Activated CD4-positive, alpha-beta memory T cell treated with anti-CD3 and anti-CD28 coated beads for 36 hours (primary cell): ENCODE measurements at regions of chr10 and their contacts with region 1.

Region 1: DNA sequence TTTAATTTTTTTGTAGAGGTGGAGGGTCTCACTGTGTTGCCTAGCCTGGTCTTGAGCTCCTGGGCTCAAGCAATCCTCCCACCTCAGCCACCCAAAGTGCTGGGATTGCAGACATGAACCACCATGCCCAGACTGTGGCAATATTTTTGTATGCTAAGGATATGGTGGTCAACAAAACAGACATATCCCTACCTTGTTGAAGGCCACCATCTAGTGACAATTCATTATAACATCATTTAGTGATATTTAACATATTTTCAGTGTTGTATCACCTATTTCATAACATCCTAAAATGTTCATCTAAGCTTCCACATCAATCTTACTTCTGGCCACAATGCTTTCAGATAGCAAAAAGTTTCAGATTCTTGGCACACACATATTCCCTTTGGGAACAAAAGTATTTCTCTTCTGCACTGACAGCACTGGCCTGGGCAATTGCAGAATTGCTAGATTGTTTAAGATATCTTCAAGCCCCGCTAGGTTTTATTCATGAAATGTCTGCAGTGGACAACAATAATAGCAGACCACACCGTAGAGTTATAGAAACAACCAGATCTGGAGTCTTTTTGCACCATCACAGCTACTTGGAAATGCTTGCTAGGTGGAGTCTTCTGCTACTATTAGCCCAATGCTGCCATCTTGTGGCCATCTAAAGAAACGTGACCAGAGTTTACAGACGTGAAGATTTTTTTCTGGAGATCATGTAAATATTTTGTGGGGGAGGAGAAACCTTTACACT is 58.4 kb downstream of the DNAJC12 start:
- DNase-seq: peak; percentile 70
- H3K4me3 Mint-ChIP-seq: no peak overlapping the region
- H3K27ac Mint-ChIP-seq: no peak overlapping the region
- H3K4me1 Mint-ChIP-seq: peaks cover 23% of the 10 kb centered on the region
- H3K27me3 Mint-ChIP-seq: no peaks in the 10 kb centered on the region

Region 2: DNA sequence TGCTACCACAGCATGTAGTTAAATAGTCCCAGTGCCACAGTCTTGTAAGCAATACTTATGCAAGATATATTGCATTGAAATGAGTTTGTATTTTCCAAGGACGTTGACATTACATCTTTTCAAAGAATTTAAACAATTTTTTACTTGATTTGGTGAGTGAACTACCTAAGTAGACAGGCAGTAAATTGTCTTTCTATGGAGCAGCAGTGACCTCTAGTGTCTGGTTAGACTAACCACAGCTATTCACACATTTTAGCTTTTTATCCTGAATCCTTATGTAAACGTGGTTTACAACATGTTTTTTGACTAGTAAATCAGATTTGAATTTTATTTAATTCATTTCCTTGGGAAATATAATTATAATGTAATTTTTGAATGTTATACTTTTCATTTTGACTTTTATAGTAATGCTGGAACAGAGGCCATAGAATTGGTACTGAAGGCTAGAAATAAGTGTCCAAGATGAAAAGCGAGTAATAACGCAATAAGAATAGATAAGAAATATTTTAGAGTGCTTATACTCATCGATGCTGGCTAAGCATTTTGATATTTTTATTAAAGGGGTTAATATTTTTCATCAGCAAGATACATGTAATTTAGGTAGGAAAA is 848.2 kb before region 1 on chr10:
- CTCF ChIA-PET with region 1: interaction called, 3 read pairs
- POLR2A ChIA-PET with region 1: no interaction called
- intact Hi-C with region 1: loop called (anchors 10 kb)
- DNase-seq: no peak
- H3K4me3 Mint-ChIP-seq: no peak overlapping the region
- H3K27ac Mint-ChIP-seq: no peak overlapping the region
- H3K4me1 Mint-ChIP-seq: no peaks in the 10 kb centered on the region
- H3K27me3 Mint-ChIP-seq: peaks cover 30% of the 10 kb centered on the region

Region 3: DNA sequence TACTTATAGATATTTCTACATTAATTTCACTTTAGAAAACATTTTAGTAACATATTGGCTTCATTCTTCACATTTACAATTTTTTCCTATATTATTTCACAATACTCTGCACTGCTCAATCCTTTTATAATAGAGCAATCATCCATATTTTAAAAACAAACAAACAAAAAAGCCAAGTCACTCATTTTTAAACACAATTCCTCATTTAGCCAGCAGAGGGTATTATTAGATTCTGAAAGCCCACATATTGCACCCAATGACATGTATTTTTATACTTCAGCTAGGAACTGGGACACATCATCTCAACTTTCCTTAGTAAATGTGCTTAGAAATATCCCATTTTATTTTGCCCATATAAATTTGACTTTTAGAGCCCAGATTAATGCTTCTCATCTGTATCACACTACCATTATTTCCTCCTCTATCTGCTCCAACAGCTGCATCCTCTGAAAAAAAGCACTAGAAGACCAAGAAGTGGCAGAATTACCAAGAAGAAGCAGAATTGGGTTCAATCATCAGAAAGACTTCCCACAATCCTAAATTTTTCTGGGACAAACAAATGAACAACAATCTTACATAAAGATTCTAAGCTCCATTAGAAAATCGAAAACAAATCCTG is 113.1 kb before region 1 on chr10:
- CTCF ChIA-PET with region 1: interaction called, 100 read pairs
- POLR2A ChIA-PET with region 1: no interaction called
- intact Hi-C with region 1: loop called (anchors 1 kb)
- DNase-seq: no peak
- H3K4me3 Mint-ChIP-seq: no peak overlapping the region
- H3K27ac Mint-ChIP-seq: no peak overlapping the region
- H3K4me1 Mint-ChIP-seq: no peaks in the 10 kb centered on the region
- H3K27me3 Mint-ChIP-seq: no peaks in the 10 kb centered on the region

Region 4: DNA sequence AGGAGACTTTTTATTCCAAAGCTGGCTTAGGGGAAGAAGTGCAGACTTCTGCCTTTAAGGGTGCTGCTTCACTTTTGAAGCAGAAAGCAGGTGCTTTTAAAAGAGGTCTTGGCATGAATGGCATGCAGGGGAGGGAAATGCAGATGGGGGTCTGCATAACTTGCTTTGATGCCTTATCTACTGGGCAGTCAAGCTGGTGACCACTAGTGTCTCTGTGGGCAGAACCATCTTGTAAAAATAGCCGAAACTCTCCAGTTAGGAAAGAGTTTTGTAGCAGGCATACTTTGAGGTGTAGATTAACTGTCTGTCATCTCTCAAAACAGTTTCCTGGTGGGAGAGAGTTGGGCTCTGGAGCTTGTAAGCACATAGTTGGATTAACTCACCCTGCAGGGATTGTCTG is 73.7 kb before region 1 on chr10:
- CTCF ChIA-PET with region 1: interaction called, 12 read pairs
- POLR2A ChIA-PET with region 1: no interaction called
- intact Hi-C with region 1: no loop called
- DNase-seq: no peak
- H3K4me3 Mint-ChIP-seq: no peak overlapping the region
- H3K27ac Mint-ChIP-seq: no peak overlapping the region
- H3K4me1 Mint-ChIP-seq: no peaks in the 10 kb centered on the region
- H3K27me3 Mint-ChIP-seq: peaks cover 3% of the 10 kb centered on the region

Region 5: DNA sequence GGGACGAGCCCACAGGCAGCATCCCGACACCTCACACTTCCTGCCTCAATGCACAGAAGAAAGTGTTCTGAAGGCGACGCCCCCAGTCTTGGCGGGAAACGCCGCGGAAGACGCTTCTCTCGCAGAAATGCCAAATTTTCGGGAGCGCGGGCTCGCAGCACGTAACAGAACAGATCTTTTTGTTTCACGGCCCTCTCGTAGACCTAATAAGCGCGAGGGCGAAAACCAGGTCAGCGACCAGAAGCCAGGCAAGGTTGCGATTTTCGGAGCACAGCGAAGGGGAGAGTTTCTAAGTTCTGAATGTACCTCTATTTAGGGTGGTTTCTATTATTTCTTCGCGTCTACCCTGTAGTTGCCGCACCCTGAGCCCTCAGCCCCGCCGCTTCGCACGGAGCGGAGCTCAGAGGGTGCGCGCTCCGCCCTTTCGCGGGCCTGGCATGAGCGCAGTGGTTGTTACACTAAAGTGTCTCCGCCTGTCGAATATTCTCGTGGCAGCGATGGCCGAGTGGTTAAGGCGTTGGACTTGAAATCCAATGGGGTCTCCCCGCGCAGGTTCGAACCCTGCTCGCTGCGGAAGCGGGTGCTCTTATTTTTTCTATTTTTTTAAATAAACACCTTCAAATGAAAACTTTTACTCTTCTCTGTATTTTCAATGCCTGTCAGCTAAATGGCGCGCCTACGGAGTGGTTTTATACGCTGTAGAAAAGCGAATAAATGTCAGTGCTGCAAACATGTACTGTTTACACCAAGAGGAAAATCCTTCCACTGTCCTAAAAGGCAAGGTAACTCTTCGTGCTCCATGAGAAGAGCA is 15.4 kb before region 1 on chr10:
- CTCF ChIA-PET with region 1: interaction called, 46 read pairs
- POLR2A ChIA-PET with region 1: no interaction called
- intact Hi-C with region 1: no loop called
- DNase-seq: peak; percentile 98
- H3K4me3 Mint-ChIP-seq: peak overlapping the region; percentile 78
- H3K27ac Mint-ChIP-seq: peak overlapping the region; percentile 91
- H3K4me1 Mint-ChIP-seq: peaks cover 11% of the 10 kb centered on the region
- H3K27me3 Mint-ChIP-seq: peaks cover 4% of the 10 kb centered on the region